Activated naive CD8-positive, alpha-beta T cell treated with anti-CD3 and anti-CD28 coated beads, Interleukin-2, amount 10 ng/mL, durations not matched to agents 7 days and 5 days (primary cell): ENCODE measurements at regions of chr11 and their contacts with region 1.

Region 1: DNA sequence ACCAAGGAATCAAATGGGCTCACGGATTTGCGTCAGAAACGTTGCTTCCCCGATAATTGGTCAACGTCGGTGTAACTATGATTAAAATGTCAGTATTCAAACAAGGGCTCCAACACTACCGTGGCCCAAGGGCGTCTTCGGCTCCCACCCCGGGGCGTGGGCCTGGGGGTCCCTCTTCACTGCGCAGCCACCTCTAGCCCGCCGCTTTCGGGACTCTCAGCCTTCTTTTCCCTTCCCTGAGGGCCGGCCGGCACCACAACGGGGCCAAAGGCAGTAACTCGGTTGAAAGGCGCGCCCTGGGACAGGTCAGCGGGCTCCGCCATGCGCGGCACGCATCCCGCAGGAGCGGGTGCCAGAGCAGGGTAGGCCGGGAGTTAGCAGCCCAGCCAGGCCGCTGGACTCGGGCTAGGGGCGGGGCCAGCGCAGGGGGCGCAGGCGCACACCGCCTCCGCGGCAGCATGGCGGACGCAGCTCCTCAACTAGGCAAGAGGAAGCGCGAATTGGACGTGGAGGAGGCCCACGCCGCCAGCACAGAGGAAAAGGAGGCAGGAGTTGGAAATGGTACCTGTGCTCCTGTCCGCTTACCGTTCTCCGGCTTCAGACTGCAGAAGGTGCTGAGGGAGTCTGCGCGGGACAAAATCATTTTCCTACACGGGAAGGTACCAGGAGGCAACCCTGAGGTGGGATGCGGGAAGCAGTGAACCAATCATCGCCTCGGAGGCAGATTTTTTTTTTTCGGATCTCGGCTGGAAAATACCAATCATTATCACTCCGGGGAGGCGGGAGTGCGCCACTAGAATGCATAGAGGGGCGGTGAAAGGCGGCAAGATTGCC is at the start of gene DCPS:
- DNase-seq: peak; percentile 93
- ATAC-seq: peak; percentile 99
- H3K4me3 Mint-ChIP-seq: peak within 1 kb of the TSS; percentile 88
- H3K27ac Mint-ChIP-seq: peak within 1 kb of the TSS; percentile 96
- H3K4me1 Mint-ChIP-seq: peaks cover 22% of the 10 kb centered on the region
- H3K27me3 Mint-ChIP-seq: no peaks in the 10 kb centered on the region
- total RNA-seq, gene DCPS: 27.4 to 29.1 TPM

Region 2: DNA sequence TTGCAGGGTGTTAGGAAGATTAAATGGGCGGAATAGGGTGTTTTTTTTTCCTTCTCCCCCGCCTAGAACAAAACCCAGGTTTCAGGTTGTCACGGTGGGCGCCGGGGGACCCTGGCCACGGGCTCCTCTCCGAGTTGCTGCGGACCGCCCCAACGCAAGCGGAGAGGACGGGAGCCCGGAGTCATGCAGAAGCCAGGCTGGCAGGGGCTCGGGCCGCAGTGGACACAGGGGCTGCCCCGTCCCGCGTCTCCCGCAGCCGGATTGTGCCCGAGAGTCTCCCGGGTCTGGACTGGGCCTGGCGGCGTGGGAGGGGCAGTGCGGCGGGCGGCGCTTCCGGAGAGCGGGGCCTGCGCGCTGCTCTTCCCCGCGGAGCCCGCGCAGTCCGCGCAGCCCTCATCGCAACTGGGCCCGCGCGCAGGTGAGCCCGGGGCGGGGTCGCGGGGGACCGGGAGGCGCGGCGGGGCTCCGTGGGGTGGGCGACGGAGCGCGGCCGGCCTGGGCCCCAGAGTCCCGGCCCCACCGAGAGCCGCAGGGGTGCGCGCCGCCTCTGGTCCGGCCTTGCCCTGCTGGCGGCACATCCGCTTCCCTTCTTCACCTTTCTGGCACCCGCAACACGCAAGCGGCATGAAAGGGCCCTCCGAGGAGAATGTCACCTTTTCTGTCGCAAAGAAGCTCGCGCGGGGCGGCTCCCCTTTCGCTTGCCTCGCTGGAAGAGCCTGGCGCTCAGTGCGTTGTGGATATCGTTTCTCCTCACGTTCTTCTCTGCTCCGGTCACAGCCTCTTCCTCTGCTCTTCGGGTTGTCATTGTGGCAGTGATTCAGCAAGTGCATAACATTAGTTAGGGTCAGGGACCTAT is 20.9 kb before region 1 on chr11 and contains the start of gene TIRAP:
- POLR2A ChIA-PET with region 1: interaction called, 15 read pairs
- DNase-seq: peak; percentile 80
- ATAC-seq: peak; percentile 78
- H3K4me3 Mint-ChIP-seq: peak within 1 kb of the TSS; percentile 98
- H3K27ac Mint-ChIP-seq: peak within 1 kb of the TSS; percentile 98
- H3K4me1 Mint-ChIP-seq: peaks cover 34% of the 10 kb centered on the region
- H3K27me3 Mint-ChIP-seq: no peaks in the 10 kb centered on the region
- total RNA-seq, gene TIRAP: 15.6 to 18.8 TPM

Region 3: DNA sequence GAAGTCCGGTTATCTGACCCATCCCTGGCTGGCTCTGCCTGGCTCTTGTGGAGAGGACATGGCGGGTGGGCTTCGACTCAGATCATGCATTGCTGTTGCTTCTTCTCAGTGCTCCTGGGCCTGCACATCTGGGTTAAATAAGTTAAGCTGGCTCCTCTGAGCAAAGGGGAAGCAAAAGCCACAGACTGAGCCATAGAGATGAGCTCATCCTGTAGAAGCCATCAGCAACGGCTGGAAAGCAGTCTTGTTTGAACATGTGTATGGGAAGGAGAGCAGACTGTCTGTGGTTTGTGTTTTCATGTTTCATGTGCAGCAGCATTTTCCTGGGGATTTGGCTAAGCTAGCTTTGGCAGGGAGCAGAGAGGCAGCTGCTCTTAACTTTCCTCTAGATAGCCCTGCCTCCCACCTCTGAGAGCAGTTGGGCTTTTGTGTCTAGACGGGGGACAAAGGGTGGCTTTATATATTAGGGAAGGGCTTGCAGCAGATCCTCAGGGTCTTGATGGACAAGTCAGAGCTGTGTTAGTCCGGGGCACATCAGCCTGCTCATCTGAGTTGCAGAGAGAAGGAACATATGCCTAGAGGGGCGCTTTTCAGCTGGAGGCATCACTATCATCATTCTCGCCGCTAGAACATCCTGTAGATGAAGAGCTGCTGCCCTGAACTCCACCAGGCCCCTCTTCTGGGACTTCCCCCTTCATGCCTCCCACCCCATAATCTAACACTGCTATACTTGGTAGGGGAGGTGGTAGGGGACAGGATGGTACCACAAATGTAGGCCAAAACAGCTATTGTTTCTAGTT is 14.9 kb after region 1 on chr11:
- POLR2A ChIA-PET with region 1: interaction called, 19 read pairs
- DNase-seq: peak; percentile 40
- ATAC-seq: peak; percentile 79
- H3K4me3 Mint-ChIP-seq: peak overlapping the region; percentile 77
- H3K27ac Mint-ChIP-seq: peak overlapping the region; percentile 93
- H3K4me1 Mint-ChIP-seq: peaks cover 34% of the 10 kb centered on the region
- H3K27me3 Mint-ChIP-seq: no peaks in the 10 kb centered on the region